MCF 10A (cell line): ENCODE measurements at regions of chr1 and their contacts with region 1.

Region 1: GRCh38 chr1:19596714-19597495 is 47.2 kb upstream of the NBL1 start:
- DNase-seq: peak; percentile 98
- H3K4me3 Mint-ChIP-seq: peak overlapping the region; percentile 95
- H3K27ac Mint-ChIP-seq: peak overlapping the region; percentile 98
- H3K4me1 Mint-ChIP-seq: peaks cover 28% of the 10 kb centered on the region
- H3K27me3 Mint-ChIP-seq: no peaks in the 10 kb centered on the region
- CTCF ChIP-seq: no peak

Region 2: DNA sequence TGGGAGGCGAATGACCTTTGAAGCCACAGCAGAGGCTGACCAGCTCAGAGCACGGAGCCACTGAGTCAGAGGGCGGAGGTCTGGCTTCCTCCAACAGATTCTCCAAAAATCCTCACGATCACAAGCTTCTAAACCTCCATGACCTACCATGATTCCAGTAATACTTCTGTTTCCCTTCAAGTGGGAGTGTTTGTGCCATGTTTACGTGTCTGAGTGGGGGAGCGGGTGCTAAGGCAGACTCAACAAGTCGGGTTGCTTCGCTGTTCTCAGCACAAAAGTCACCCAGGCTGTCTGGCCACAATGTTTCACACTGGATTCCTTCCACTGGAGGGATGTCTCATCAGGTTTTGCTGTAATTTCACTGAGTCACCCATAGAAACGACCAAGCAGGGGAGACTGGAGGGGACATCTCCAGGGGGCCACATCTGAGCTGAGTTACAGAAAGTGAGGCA is 198.6 kb before region 1 on chr1:
- CTCF ChIA-PET with region 1: no interaction called
- POLR2A ChIA-PET with region 1: no interaction called
- intact Hi-C with region 1: loop called (anchors 5 kb)
- DNase-seq: peak; percentile 29
- H3K4me3 Mint-ChIP-seq: no peak overlapping the region
- H3K27ac Mint-ChIP-seq: no peak overlapping the region
- H3K4me1 Mint-ChIP-seq: peaks cover 21% of the 10 kb centered on the region
- H3K27me3 Mint-ChIP-seq: no peaks in the 10 kb centered on the region
- CTCF ChIP-seq: no peak

Region 3: GRCh38 chr1:19439464-19440171 is 157.3 kb before region 1 on chr1:
- CTCF ChIA-PET with region 1: no interaction called
- POLR2A ChIA-PET with region 1: interaction called, 10 read pairs
- intact Hi-C with region 1: no loop called
- DNase-seq: peak; percentile 41
- H3K4me3 Mint-ChIP-seq: no peak overlapping the region
- H3K27ac Mint-ChIP-seq: peak overlapping the region; percentile 83
- H3K4me1 Mint-ChIP-seq: peaks cover 72% of the 10 kb centered on the region
- H3K27me3 Mint-ChIP-seq: no peaks in the 10 kb centered on the region
- CTCF ChIP-seq: no peak

Region 4: DNA sequence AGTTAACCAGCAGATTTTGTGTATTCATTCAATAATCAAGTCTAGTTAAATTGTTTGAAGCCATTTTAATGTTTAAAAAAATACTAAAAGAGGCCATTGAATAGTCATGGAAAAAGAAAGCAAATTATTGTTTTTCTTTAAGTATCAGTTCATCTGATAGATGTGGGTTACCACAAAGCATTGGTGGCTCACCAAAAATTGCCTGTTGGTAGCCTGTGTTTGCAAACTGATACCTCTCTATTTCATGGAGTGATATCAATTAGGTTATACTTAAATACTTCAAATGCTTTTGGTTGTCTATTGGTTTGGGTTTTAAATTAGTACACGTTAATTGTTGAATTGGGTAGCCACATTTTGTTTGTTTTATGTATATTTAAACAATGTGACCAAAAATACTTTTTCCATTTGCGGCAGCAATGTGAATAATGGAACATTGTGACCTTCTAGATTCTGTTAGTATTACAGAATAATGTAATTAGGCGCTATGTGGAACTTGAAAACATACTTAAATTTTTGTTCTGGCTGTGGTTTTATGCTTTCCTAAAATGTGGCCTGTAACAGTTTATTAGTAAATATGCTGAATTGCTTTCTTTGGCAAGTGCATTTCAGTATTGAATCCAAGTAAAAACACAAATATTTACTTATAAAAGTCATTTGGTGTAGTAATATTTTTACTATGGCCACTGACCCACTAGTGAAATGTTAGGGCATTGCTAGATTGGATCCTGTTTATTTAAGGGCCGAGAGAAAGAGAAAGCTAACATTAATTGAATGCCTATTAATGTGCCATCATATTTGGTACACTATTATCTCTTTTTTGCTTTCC is 10.1 kb after region 1 on chr1:
- CTCF ChIA-PET with region 1: no interaction called
- POLR2A ChIA-PET with region 1: interaction called, 12 read pairs
- intact Hi-C with region 1: no loop called
- DNase-seq: no peak
- H3K4me3 Mint-ChIP-seq: no peak overlapping the region
- H3K27ac Mint-ChIP-seq: no peak overlapping the region
- H3K4me1 Mint-ChIP-seq: peaks cover 19% of the 10 kb centered on the region
- H3K27me3 Mint-ChIP-seq: no peaks in the 10 kb centered on the region
- CTCF ChIP-seq: no peak

Region 5: DNA sequence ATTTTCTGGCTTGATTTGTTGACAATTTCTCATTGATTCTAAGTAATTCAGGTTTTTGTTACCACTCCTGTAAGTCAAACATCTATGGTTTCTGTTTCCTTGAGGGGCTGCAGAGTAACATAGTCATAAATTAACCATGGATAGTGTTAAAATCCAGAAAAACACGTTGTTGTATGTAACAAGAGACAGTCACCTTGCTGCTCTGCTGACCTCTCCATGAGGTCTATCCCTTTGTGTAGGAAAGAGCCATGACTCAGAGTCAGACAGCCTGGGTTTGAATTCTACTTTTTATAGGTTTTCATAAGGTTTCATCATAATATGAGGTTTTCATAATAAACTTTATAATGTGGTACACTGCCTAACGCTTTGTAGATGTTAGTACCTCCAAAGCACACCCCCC is 19.6 kb after region 1 on chr1:
- CTCF ChIA-PET with region 1: interaction called, 3 read pairs
- POLR2A ChIA-PET with region 1: interaction called, 19 read pairs
- intact Hi-C with region 1: no loop called
- DNase-seq: peak; percentile 42
- H3K4me3 Mint-ChIP-seq: no peak overlapping the region
- H3K27ac Mint-ChIP-seq: peak overlapping the region; percentile 75
- H3K4me1 Mint-ChIP-seq: peaks cover 53% of the 10 kb centered on the region
- H3K27me3 Mint-ChIP-seq: no peaks in the 10 kb centered on the region
- CTCF ChIP-seq: no peak